Adrenal gland (tissue), 19 donors: ENCODE measurements at regions of chr13 and their contacts with region 1.

Region 1: DNA sequence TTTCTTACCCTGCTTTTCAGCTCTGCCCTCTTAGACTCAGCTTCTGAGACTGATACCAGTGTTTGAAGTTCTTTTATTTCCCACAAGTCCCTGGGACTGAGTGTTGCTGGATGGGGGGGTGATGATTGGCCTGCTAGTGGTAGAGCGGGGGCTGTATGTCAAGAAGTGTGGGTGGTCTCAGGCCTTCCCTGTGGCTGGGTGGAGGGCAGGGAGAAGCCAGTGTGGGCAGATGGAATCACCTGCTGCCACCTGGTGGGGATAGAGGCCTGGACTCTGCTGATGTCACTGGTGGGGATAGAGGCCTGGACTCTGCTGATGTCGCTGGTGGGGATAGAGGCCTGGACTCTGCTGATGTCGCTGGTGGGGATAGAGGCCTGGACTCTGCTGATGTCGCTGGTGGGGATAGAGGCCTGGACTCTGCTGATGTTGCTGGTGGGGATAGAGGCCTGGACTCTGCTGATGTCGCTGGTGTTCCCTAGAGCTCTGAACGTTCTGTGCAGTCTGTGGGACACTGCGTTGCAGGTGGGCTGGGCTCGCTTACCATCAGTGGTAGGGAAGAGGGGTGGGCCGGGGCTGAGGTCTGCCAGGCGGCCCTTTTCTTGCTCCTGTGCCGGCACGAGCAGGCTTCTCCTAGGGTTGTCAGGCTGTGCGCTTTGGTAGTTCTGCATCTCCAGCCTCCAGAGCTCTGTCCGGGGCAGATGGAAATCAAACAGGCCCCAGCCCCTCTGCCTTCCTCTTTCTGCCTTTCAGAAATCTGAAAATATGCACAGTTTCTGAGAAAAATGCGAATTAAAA is 101.3 kb downstream of the ARHGEF7 start:
- DNase-seq: peak in 3 of 7 donors; percentile 34 to 69 (median 41)
- H3K4me3 ChIP-seq: no peak overlapping the region
- H3K27ac ChIP-seq: no peak overlapping the region
- H3K4me1 ChIP-seq: peaks cover 12 to 23% of the 10 kb centered on the region in 2 donors
- H3K27me3 ChIP-seq: no peaks in the 10 kb centered on the region
- CTCF ChIP-seq: peak in 5 of 6 experiments; percentile 10 to 47 (median 28)
- POLR2A ChIP-seq: no peak

Region 2: GRCh38 chr13:110915057-110915873 is 301.1 kb before region 1 on chr13 and contains the start of gene ANKRD10:
- intact Hi-C with region 1: loop called (anchors 10 kb)
- DNase-seq: peak; percentile 99
- H3K4me3 ChIP-seq: peak within 1 kb of the TSS; percentile 18 to 89 (median 81)
- H3K27ac ChIP-seq: peak within 1 kb of the TSS; percentile 88 to 99 (median 98)
- H3K4me1 ChIP-seq: peaks cover 14 to 44% of the 10 kb centered on the region in 2 donors
- H3K27me3 ChIP-seq: no peaks in the 10 kb centered on the region
- CTCF ChIP-seq: peak; percentile 71 to 97 (median 84)
- POLR2A ChIP-seq: peak; percentile 40 to 45
- total RNA-seq, gene ANKRD10: 50.1 to 159 (median 99.0) TPM

Region 3: GRCh38 chr13:111066544-111066943 is 149.8 kb before region 1 on chr13:
- intact Hi-C with region 1: loop called (anchors 5 kb)
- DNase-seq: peak; percentile 48 to 84 (median 81)
- H3K4me3 ChIP-seq: peak overlapping the region in 2 of 4 donors; percentile 60 to 81
- H3K27ac ChIP-seq: peak overlapping the region; percentile 73 to 96 (median 90)
- H3K4me1 ChIP-seq: peaks cover 0 to 4% of the 10 kb centered on the region in 2 donors
- H3K27me3 ChIP-seq: no peaks in the 10 kb centered on the region
- CTCF ChIP-seq: no peak
- POLR2A ChIP-seq: peak in 1 of 2 donors; percentile 77

Region 4: GRCh38 chr13:111153279-111153976 is 62.9 kb before region 1 on chr13:
- intact Hi-C with region 1: loop called in 1 of 2 experiments (anchors 5 kb)
- DNase-seq: peak; percentile 90 to 96 (median 92)
- H3K4me3 ChIP-seq: peak overlapping the region; percentile 3 to 87 (median 68)
- H3K27ac ChIP-seq: peak overlapping the region; percentile 83 to 100 (median 97)
- H3K4me1 ChIP-seq: peaks cover 23 to 49% of the 10 kb centered on the region in 2 donors
- H3K27me3 ChIP-seq: no peaks in the 10 kb centered on the region
- CTCF ChIP-seq: peak in 2 of 6 experiments; percentile 7 to 34
- POLR2A ChIP-seq: peak; percentile 90 to 94

Region 5: GRCh38 chr13:111323950-111324651 is 107.7 kb after region 1 on chr13:
- intact Hi-C with region 1: no loop called
- DNase-seq: no peak
- H3K4me3 ChIP-seq: no peak overlapping the region
- H3K27ac ChIP-seq: no peak overlapping the region
- H3K4me1 ChIP-seq: no peaks in the 10 kb centered on the region
- H3K27me3 ChIP-seq: no peaks in the 10 kb centered on the region
- CTCF ChIP-seq: no peak
- POLR2A ChIP-seq: no peak